CD8-positive, alpha-beta memory T cell (primary cell): ENCODE measurements at regions of chr17 and their contacts with region 1.

Region 1: GRCh38 chr17:58172369-58173071 is 5.7 kb downstream of the OR4D2 start:
- DNase-seq: peak in 4 of 5 donors; percentile 21 to 67 (median 58)
- H3K4me3 ChIP-seq: no peak overlapping the region
- H3K4me3 Mint-ChIP-seq: peak overlapping the region in 6 of 7 donors; percentile 16 to 55 (median 46)
- H3K27ac ChIP-seq: no peak overlapping the region
- H3K27ac Mint-ChIP-seq: peak overlapping the region; percentile 13 to 91 (median 69)
- H3K4me1 ChIP-seq: peaks cover 43% of the 10 kb centered on the region
- H3K4me1 Mint-ChIP-seq: peaks cover 41 to 49% (median 46%) of the 10 kb centered on the region in 3 donors
- H3K27me3 ChIP-seq: peaks cover 6% of the 10 kb centered on the region
- H3K27me3 Mint-ChIP-seq: peaks cover 2 to 12% of the 10 kb centered on the region in 2 donors

Region 2: DNA sequence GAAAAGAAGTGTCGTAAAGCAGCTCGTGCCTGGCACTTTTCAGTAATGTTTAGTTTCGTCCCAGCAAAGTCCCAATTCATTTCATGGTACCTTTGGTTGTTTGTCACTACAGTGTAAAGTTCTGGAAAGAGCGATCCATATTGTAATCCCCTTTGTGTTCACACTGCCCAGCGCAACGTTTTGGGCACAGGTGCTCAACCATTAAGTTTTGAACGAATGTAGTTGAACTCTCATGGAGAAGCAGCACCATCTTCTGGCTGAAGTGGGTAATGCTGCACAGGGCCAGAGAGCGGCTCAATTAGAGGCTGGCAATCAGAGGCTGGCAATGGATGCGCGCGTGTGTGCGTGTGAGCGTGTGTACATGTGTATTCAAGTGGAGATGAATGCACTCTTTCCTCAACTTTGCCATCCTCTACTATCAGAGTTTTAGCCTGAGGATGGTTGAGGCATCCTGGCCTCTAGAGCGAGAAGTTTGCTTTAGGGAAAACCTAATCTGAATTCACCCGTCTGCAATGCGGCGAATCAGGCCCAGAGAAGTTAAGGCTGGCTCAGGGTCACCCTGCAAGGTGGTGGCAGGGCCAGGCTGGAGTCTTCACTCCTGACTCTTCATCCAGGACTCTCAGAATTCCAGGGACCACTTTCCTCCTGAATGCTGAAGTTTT is 59.4 kb before region 1 on chr17:
- CTCF ChIA-PET with region 1: interaction called, 21 read pairs
- POLR2A ChIA-PET with region 1: no interaction called
- DNase-seq: peak; percentile 68 to 86 (median 74)
- H3K4me3 ChIP-seq: no peak overlapping the region
- H3K4me3 Mint-ChIP-seq: no peak overlapping the region
- H3K27ac ChIP-seq: no peak overlapping the region
- H3K27ac Mint-ChIP-seq: no peak overlapping the region
- H3K4me1 ChIP-seq: no peaks in the 10 kb centered on the region
- H3K4me1 Mint-ChIP-seq: peaks cover 0 to 4% (median 1%) of the 10 kb centered on the region in 3 donors
- H3K27me3 ChIP-seq: no peaks in the 10 kb centered on the region
- H3K27me3 Mint-ChIP-seq: peaks cover 9 to 41% of the 10 kb centered on the region in 2 donors

Region 3: GRCh38 chr17:58121925-58122324 is 50.6 kb before region 1 on chr17:
- CTCF ChIA-PET with region 1: interaction called, 90 read pairs
- POLR2A ChIA-PET with region 1: interaction called, 9 read pairs
- DNase-seq: peak in 4 of 5 donors; percentile 30 to 72 (median 50)
- H3K4me3 ChIP-seq: no peak overlapping the region
- H3K4me3 Mint-ChIP-seq: peak overlapping the region in 1 of 7 donors; percentile 0
- H3K27ac ChIP-seq: no peak overlapping the region
- H3K27ac Mint-ChIP-seq: no peak overlapping the region
- H3K4me1 ChIP-seq: peaks cover 6% of the 10 kb centered on the region
- H3K4me1 Mint-ChIP-seq: peaks cover 10 to 15% (median 14%) of the 10 kb centered on the region in 3 donors
- H3K27me3 ChIP-seq: no peaks in the 10 kb centered on the region
- H3K27me3 Mint-ChIP-seq: peaks cover 9 to 23% of the 10 kb centered on the region in 2 donors

Region 4: GRCh38 chr17:58156839-58157803 is 15.4 kb before region 1 on chr17:
- CTCF ChIA-PET with region 1: interaction called, 18 read pairs
- POLR2A ChIA-PET with region 1: interaction called, 4 read pairs
- DNase-seq: peak; percentile 16 to 71 (median 55)
- H3K4me3 ChIP-seq: peak overlapping the region; percentile 64
- H3K4me3 Mint-ChIP-seq: peak overlapping the region; percentile 83 to 96 (median 92)
- H3K27ac ChIP-seq: peak overlapping the region; percentile 60
- H3K27ac Mint-ChIP-seq: peak overlapping the region; percentile 88 to 99 (median 95)
- H3K4me1 ChIP-seq: peaks cover 57% of the 10 kb centered on the region
- H3K4me1 Mint-ChIP-seq: peaks cover 57 to 89% (median 84%) of the 10 kb centered on the region in 3 donors
- H3K27me3 ChIP-seq: no peaks in the 10 kb centered on the region
- H3K27me3 Mint-ChIP-seq: peaks cover 0 to 3% of the 10 kb centered on the region in 2 donors

Region 5: GRCh38 chr17:58300336-58300735 is 127.8 kb after region 1 on chr17:
- CTCF ChIA-PET with region 1: no interaction called
- POLR2A ChIA-PET with region 1: no interaction called
- DNase-seq: no peak
- H3K4me3 ChIP-seq: no peak overlapping the region
- H3K4me3 Mint-ChIP-seq: no peak overlapping the region
- H3K27ac ChIP-seq: no peak overlapping the region
- H3K27ac Mint-ChIP-seq: no peak overlapping the region
- H3K4me1 ChIP-seq: no peaks in the 10 kb centered on the region
- H3K4me1 Mint-ChIP-seq: peaks cover 5 to 10% (median 6%) of the 10 kb centered on the region in 3 donors
- H3K27me3 ChIP-seq: no peaks in the 10 kb centered on the region
- H3K27me3 Mint-ChIP-seq: no peaks in the 10 kb centered on the region